MCF 10A (cell line): ENCODE measurements at regions of chr6 and their contacts with region 1.

Region 1: GRCh38 chr6:138115877-138116660 is 8.8 kb upstream of the PERP start:
- DNase-seq: peak; percentile 68
- H3K4me3 Mint-ChIP-seq: no peak overlapping the region
- H3K27ac Mint-ChIP-seq: no peak overlapping the region
- H3K4me1 Mint-ChIP-seq: no peaks in the 10 kb centered on the region
- H3K27me3 Mint-ChIP-seq: peaks cover 25% of the 10 kb centered on the region
- CTCF ChIP-seq: peak; percentile 79

Region 2: DNA sequence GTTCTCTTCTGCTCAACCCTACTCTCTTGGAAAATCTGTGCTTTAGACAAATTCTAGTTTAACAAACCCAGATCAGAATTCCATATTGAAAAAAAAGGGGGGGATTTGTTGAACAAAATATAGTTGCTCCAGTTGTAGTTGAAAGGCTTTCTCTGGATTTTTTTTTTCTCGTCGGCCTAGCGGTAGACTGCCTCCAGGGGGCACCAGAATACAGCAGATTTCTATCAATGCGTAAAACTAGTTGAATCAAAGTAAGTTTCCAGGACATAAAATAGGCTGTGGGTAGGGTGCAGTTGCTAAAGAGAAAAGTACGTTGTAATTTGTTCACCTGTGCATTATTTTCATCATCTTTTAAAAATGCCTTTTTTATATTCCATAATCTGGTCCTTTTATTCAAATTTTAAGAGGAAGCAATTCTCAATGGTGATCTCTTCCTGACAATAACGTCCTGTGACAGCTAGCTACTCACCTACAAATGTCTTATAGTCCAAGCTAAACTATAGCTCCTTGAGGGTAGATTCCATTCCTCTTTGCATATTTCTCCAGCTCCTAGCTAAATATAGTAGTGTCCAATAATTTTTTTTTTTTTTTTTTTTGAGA is 114.2 kb before region 1 on chr6:
- CTCF ChIA-PET with region 1: interaction called, 40 read pairs
- POLR2A ChIA-PET with region 1: interaction called, 5 read pairs
- intact Hi-C with region 1: no loop called
- DNase-seq: peak; percentile 65
- H3K4me3 Mint-ChIP-seq: no peak overlapping the region
- H3K27ac Mint-ChIP-seq: no peak overlapping the region
- H3K4me1 Mint-ChIP-seq: peaks cover 10% of the 10 kb centered on the region
- H3K27me3 Mint-ChIP-seq: no peaks in the 10 kb centered on the region
- CTCF ChIP-seq: peak; percentile 83

Region 3: GRCh38 chr6:138287144-138287955 is 171.3 kb after region 1 on chr6:
- CTCF ChIA-PET with region 1: interaction called, 33 read pairs
- POLR2A ChIA-PET with region 1: no interaction called
- intact Hi-C with region 1: loop called (anchors 2 kb)
- DNase-seq: peak; percentile 61
- H3K4me3 Mint-ChIP-seq: no peak overlapping the region
- H3K27ac Mint-ChIP-seq: peak overlapping the region; percentile 81
- H3K4me1 Mint-ChIP-seq: peaks cover 20% of the 10 kb centered on the region
- H3K27me3 Mint-ChIP-seq: no peaks in the 10 kb centered on the region
- CTCF ChIP-seq: peak; percentile 40

Region 4: GRCh38 chr6:138410972-138411667 is 295.1 kb after region 1 on chr6:
- CTCF ChIA-PET with region 1: interaction called, 13 read pairs
- POLR2A ChIA-PET with region 1: interaction called, 6 read pairs
- intact Hi-C with region 1: no loop called
- DNase-seq: peak; percentile 89
- H3K4me3 Mint-ChIP-seq: peak overlapping the region; percentile 7
- H3K27ac Mint-ChIP-seq: peak overlapping the region; percentile 29
- H3K4me1 Mint-ChIP-seq: peaks cover 37% of the 10 kb centered on the region
- H3K27me3 Mint-ChIP-seq: no peaks in the 10 kb centered on the region
- CTCF ChIP-seq: no peak

Region 5: GRCh38 chr6:138509371-138509770 is 393.3 kb after region 1 on chr6:
- CTCF ChIA-PET with region 1: interaction called, 32 read pairs
- POLR2A ChIA-PET with region 1: no interaction called
- intact Hi-C with region 1: loop called (anchors 1 kb)
- DNase-seq: peak; percentile 71
- H3K4me3 Mint-ChIP-seq: no peak overlapping the region
- H3K27ac Mint-ChIP-seq: no peak overlapping the region
- H3K4me1 Mint-ChIP-seq: peaks cover 18% of the 10 kb centered on the region
- H3K27me3 Mint-ChIP-seq: no peaks in the 10 kb centered on the region
- CTCF ChIP-seq: peak; percentile 33

Region 6: DNA sequence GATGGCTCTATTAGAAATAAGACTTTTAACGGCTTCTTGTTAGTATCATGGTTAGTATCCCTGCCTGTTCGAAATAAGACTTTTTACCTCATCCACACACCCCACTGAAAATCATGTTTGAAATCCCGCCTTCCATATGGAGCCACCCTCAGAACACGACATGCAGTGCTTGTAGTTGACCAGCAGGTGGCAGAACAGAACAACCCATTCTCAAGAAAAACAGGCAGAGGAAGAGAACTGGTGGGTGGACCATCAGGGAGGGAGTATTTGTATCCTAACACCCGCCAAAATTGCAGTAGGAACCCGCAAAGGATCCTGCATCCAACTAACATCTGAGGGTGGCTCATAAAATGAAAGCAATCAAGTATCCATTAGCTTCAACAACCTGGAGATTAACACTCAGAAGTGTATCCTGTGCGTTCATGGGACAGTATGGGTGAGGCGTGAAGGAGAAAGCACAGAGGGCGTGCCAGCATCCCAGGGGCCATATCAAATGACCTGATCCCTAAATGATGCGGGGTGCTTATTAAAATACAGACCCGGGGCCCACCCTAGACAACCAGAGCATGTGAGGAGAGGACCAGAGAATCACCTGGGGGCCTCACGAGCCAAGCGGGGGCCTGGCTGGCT is 472.9 kb after region 1 on chr6:
- CTCF ChIA-PET with region 1: interaction called, 30 read pairs
- POLR2A ChIA-PET with region 1: no interaction called
- intact Hi-C with region 1: loop called (anchors 1 kb)
- DNase-seq: peak; percentile 84
- H3K4me3 Mint-ChIP-seq: no peak overlapping the region
- H3K27ac Mint-ChIP-seq: no peak overlapping the region
- H3K4me1 Mint-ChIP-seq: peaks cover 31% of the 10 kb centered on the region
- H3K27me3 Mint-ChIP-seq: no peaks in the 10 kb centered on the region
- CTCF ChIP-seq: peak; percentile 82

Region 7: DNA sequence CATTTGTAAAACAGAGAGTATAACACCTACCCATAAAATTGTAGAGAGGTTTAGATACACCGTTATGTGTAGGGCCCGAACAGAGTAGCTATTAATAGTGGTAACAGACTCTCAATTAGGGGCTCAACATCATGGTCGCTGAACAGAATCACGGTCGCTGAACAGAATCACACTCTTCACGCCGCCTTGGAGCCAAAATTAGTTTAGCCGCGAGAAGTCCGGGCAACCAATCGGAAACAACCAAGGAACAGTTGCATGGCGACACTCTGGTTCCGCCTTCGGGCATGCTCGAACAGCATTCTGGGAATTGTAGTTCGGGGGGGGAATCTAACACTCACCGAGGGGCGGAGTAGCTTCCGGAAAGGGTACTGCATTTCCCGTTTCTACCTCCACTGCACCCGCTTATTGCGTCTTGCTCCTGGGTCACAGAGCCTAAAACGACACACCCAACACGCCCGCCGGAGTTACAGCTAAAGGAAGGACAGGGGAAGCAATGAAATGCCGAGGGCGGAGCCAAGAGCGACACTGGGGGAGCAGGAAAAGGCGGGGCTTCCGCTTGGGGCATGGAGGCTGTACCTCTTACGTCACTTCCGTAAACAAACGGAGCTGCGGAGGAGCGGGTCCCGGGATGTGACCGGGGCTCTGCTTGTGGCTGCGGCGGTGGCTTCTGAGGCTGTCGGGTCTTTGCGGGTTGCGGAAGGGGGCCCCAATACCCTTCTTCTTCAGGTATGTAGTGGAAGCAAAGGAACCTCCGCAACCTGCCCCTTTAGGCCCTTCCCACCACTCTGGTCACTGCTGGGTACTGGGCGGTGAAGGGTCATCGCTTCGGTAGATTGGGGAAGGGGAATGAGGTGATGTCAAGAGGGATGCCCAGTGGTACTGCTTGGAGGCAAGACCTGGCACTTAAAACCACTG is 657.4 kb after region 1 on chr6 and contains the start of gene CCDC28A:
- CTCF ChIA-PET with region 1: interaction called, 13 read pairs
- POLR2A ChIA-PET with region 1: no interaction called
- intact Hi-C with region 1: no loop called
- DNase-seq: peak; percentile 97
- H3K4me3 Mint-ChIP-seq: peak within 1 kb of the TSS; percentile 95
- H3K27ac Mint-ChIP-seq: peak within 1 kb of the TSS; percentile 99
- H3K4me1 Mint-ChIP-seq: no peaks in the 10 kb centered on the region
- H3K27me3 Mint-ChIP-seq: no peaks in the 10 kb centered on the region
- CTCF ChIP-seq: no peak
- total RNA-seq, gene CCDC28A: 14.8 and 15.8 TPM in 2 replicates